H1 (cell line): ENCODE measurements at regions of chr3 and their contacts with region 1.

Region 1: GRCh38 chr3:55556619-55557537 is 69.8 kb upstream of the WNT5A start:
- DNase-seq: no peak
- H3K4me3 ChIP-seq: no peak overlapping the region
- H3K27ac ChIP-seq: peak overlapping the region; percentile 25; the same call in 1 of the 2 replicates
- H3K4me1 ChIP-seq: peaks cover 13 to 28% (median 21%) of the 10 kb centered on the region in 4 experiments
- H3K27me3 ChIP-seq: no peaks in the 10 kb centered on the region
- CTCF ChIP-seq: no peak
- EP300 ChIP-seq: no peak
- POLR2A ChIP-seq: no peak
- RAD21 ChIP-seq: no peak

Region 2: DNA sequence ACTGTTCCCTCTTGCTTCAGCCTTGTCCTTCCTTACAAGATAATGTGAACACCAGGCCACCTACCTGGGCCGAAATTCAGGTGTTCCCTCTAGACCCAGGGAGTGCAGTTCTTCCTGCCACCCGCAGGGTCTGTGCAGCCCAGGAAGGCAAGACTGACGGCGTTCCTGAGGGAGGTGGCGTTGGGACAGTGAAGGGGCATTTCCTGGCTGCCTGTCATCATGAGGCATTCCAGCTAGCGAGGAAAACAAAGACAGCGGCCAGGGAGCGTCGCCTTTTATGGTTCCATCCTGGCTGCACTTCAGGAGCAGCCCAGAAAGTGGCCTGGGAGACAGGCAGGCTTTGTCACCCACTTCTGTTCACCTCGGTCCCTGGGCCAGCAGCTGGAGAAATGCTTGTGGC is 15.0 kb after region 1 on chr3:
- CTCF ChIA-PET with region 1: interaction called, 17 read pairs
- POLR2A ChIA-PET with region 1: interaction called, 3 read pairs
- DNase-seq: peak; percentile 73 to 88
- H3K4me3 ChIP-seq: no peak overlapping the region
- H3K27ac ChIP-seq: peak overlapping the region; percentile 38; the same call in 1 of the 2 replicates
- H3K4me1 ChIP-seq: peaks cover 8 to 22% (median 18%) of the 10 kb centered on the region in 4 experiments
- H3K27me3 ChIP-seq: no peaks in the 10 kb centered on the region; a peak in 1 of 7 replicates
- CTCF ChIP-seq: peak; percentile 28 to 60 (median 53); a peak in 3 of 4 replicates
- EP300 ChIP-seq: no peak
- POLR2A ChIP-seq: no peak
- RAD21 ChIP-seq: peak; percentile 35 to 50

Region 3: DNA sequence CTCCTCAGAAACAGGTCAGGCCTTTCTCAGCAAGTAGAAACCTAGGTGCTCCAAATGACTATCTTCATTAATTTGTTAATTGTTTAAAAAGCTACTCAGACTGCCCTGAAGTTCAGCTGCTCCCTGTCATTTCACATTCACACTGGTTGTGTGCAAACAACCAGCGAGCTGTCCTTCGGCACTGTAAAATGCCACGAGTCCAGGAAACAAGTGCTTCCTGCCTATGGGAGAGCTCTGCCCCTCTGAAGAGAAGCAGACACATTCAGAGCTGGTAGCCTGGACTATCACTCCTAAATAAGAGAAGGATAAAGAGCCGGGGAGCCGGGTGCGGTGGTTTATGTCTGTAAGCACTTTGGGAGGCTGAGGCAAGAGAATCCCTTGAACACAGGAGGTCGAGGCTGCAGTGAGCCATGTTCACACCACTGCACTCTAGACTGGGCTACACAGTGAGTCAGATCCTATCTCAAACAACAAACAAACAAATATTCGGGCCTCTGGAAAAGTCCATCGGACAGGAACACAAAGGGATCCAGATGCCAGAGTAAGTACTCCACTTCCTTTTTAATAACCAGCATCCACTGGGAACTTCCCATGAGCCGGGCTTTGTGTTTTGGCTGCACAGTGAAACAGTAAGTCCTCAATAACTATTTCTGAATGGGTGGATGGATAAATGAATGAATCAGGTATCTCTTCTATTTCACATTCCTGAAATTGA is 44.6 kb after region 1 on chr3:
- CTCF ChIA-PET with region 1: no interaction called
- POLR2A ChIA-PET with region 1: no interaction called
- DNase-seq: no peak
- H3K4me3 ChIP-seq: no peak overlapping the region
- H3K27ac ChIP-seq: no peak overlapping the region
- H3K4me1 ChIP-seq: peaks cover 0 to 5% (median 3%) of the 10 kb centered on the region in 4 experiments; a peak in 3 of 7 replicates
- H3K27me3 ChIP-seq: no peaks in the 10 kb centered on the region
- CTCF ChIP-seq: no peak
- EP300 ChIP-seq: no peak
- POLR2A ChIP-seq: no peak
- RAD21 ChIP-seq: no peak